AG04450 (cell line): ENCODE measurements at regions of chr16 and their contacts with region 1.

Region 1: DNA sequence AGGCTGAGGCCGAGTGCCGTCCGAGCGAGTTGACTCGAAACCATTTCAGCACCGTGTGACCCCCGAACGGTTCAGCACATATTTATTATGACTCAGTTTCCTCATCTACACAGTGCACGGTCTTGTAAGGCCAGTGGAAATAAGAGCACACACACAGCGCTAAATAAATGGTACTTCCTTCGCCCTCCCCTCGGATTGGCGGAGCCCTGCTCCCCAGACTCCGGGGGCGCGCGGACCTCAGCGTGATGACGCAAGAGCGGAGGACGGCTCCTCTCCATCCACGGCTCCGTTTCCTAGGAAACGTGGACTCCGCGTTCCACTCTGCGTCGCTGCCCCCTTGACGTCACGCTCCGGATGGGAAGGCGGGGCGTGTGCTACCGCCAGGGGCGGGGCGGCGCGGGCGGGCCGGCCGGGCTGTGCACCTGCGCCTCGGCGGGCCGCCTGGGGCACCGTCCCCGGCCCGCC is at the start of gene PARD6A:
- DNase-seq: peak; percentile 91
- H3K4me3 ChIP-seq: peak within 1 kb of the TSS; percentile 92
- H3K27ac ChIP-seq: peak within 1 kb of the TSS; percentile 91
- H3K27me3 ChIP-seq: no peaks in the 10 kb centered on the region
- CTCF ChIP-seq: no peak
- polyA plus RNA-seq, gene PARD6A: 0.42 and 0.53 TPM in 2 replicates

Region 2: DNA sequence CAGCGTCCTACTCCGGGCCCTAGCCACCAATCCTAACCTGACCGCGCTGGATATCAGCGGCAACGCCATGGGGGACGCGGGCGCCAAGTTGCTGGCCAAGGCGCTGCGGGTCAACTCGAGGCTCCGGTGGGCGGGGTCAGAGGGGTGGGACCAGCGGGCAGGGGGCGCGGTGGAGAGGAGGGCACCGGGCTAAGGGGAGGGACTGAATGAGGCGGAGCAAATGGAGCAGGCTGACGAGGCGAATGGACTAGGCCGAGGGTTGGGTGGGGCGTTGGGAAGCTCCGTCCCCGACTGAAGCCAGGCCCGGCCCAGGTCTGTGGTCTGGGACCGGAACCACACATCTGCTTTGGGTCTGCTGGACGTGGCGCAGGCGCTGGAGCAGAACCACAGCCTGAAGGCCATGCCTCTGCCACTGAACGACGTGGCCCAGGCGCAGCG is 11.1 kb before region 1 on chr16:
- CTCF ChIA-PET with region 1: interaction called, 4 read pairs
- POLR2A ChIA-PET with region 1: interaction called, 12 read pairs
- DNase-seq: no peak
- H3K4me3 ChIP-seq: no peak overlapping the region
- H3K27ac ChIP-seq: no peak overlapping the region
- H3K27me3 ChIP-seq: peaks cover 60% of the 10 kb centered on the region
- CTCF ChIP-seq: no peak

Region 3: GRCh38 chr16:67672739-67673662 is 12.4 kb after region 1 on chr16:
- CTCF ChIA-PET with region 1: no interaction called
- POLR2A ChIA-PET with region 1: no interaction called
- DNase-seq: peak; percentile 56
- H3K4me3 ChIP-seq: no peak overlapping the region
- H3K27ac ChIP-seq: no peak overlapping the region
- H3K27me3 ChIP-seq: no peaks in the 10 kb centered on the region
- CTCF ChIP-seq: peak; percentile 83